ENCODE measurements at regions of chr12 and their contacts with region 1.

Region 1: DNA sequence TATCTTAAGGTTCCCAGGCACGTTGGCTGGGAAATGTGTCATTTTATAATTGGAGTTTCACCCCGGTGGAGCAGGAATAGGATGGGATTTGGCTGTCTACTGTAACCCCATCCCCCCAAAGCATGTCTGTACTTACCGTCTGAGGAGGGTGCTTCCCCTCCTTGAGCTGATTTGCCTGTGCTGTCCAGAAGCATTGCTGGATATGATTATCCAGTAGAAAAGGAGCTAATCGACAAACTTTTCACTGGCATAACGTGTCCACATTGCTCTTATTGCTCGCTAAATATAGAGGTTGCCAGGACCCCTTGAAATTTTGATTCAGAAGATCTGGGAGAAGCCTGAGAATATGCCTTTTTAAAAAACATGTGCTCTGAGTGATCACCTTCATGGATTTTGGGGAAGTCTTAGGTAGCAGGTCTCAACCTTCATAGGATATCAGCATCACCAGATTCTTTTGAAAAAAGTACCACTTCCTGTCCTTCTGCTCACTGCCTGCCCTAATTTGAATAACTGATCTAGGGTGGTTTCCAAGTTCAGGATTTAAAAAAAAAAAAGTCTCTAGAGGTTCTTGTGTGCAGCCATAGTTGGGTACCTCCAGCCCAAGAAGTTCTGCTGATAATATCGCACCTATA is 80.4 kb upstream of the KCNA1 start:
- DNase-seq: no peak
- ATAC-seq: no peak
- H3K4me3 Mint-ChIP-seq: no peak overlapping the region
- H3K27ac Mint-ChIP-seq: no peak overlapping the region
- H3K4me1 Mint-ChIP-seq: peaks cover 11% of the 10 kb centered on the region; the same call in 1 of the 2 replicates
- H3K27me3 Mint-ChIP-seq: no peaks in the 10 kb centered on the region
- CTCF ChIP-seq: no peak

Region 2: DNA sequence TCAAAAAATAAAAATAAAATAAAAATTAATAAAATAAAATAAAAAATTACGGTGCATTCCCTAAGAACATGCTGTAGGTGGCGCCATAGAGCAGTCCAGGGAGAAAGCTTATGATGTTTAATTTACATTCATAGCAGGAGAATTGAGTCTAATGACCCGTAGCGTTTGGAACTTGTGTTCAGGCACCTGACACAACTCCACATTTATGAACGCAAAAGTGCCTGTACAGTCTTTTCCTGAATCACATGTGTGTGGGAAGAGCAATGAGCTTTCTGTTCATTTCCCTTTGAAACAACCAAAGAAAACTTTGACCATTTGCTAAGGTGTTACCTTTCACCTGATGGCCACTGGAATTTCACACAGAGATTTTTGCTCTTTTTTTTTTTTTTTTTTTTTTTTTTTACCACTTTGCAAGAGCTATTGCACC is 19.9 kb after region 1 on chr12:
- CTCF ChIA-PET with region 1: interaction called, 17 read pairs
- POLR2A ChIA-PET with region 1: no interaction called
- DNase-seq: no peak
- ATAC-seq: no peak
- H3K4me3 Mint-ChIP-seq: no peak overlapping the region
- H3K27ac Mint-ChIP-seq: no peak overlapping the region
- H3K4me1 Mint-ChIP-seq: no peaks in the 10 kb centered on the region
- H3K27me3 Mint-ChIP-seq: no peaks in the 10 kb centered on the region; the same call in 1 of the 2 replicates
- CTCF ChIP-seq: peak; percentile 79

Measured in WTC11 (cell line).